HCT116 (cell line): ENCODE measurements at regions of chr6 and their contacts with region 1.

Region 1: GRCh38 chr6:131694831-131695426 is 6.3 kb downstream of the OR2A4 start:
- DNase-seq: peak; percentile 47
- ATAC-seq: peak; percentile 97
- H3K4me3 ChIP-seq: no peak overlapping the region
- H3K27ac ChIP-seq: no peak overlapping the region
- H3K4me1 ChIP-seq: no peaks in the 10 kb centered on the region
- H3K27me3 ChIP-seq: no peaks in the 10 kb centered on the region
- CTCF ChIP-seq: peak; percentile 73 to 87 (median 75); a peak in 5 of 6 replicates
- POLR2A ChIP-seq: no peak
- RAD21 ChIP-seq: peak; percentile 87

Region 2: DNA sequence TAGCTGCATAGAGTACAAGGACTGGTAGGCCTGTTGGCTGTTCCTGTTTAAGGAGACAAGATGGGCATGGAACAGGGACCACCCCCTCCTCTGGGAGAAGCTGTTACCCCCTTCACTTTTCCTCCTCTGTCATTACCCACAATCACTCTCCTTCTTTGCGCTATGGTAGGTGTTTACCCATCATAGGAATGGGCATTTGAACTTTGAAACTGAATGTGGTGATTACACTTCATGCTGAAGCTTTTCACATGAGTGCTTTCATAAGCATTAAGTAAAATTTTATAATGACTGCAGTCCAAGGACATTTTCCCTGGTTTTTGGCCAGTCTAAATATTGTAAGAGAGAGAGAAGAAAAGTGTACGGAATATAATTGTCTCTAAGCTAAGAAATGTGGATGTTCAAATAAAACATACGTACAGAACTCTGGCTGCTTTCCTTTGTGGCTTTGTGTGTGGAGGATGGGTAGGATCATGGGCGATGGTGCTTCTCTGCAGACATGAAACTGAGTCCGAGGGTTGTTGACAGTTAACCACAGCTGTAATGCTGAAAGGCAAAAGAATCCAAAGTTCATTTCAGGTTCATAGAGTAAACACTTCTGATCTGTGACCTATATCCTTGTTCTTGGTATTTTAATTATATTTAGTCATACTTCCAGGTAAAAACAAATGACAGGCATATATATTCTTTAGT is 200.0 kb after region 1 on chr6:
- CTCF ChIA-PET with region 1: no interaction called
- POLR2A ChIA-PET with region 1: no interaction called
- RAD21 ChIA-PET with region 1: no interaction called
- intact Hi-C with region 1: loop called (anchors 5 kb)
- DNase-seq: no peak
- ATAC-seq: no peak
- H3K4me3 ChIP-seq: no peak overlapping the region
- H3K27ac ChIP-seq: no peak overlapping the region
- H3K4me1 ChIP-seq: no peaks in the 10 kb centered on the region
- H3K27me3 ChIP-seq: no peaks in the 10 kb centered on the region
- CTCF ChIP-seq: no peak
- POLR2A ChIP-seq: no peak
- RAD21 ChIP-seq: no peak

Region 3: GRCh38 chr6:131909408-131910218 is 214.7 kb after region 1 on chr6:
- CTCF ChIA-PET with region 1: interaction called, 60 read pairs
- POLR2A ChIA-PET with region 1: no interaction called
- RAD21 ChIA-PET with region 1: interaction called, 9 read pairs
- intact Hi-C with region 1: loop called (anchors 1 kb)
- DNase-seq: peak; percentile 57
- ATAC-seq: peak; percentile 94
- H3K4me3 ChIP-seq: no peak overlapping the region
- H3K27ac ChIP-seq: no peak overlapping the region
- H3K4me1 ChIP-seq: no peaks in the 10 kb centered on the region
- H3K27me3 ChIP-seq: no peaks in the 10 kb centered on the region
- CTCF ChIP-seq: peak; percentile 74 to 82 (median 82)
- POLR2A ChIP-seq: no peak
- RAD21 ChIP-seq: peak; percentile 86

Region 4: DNA sequence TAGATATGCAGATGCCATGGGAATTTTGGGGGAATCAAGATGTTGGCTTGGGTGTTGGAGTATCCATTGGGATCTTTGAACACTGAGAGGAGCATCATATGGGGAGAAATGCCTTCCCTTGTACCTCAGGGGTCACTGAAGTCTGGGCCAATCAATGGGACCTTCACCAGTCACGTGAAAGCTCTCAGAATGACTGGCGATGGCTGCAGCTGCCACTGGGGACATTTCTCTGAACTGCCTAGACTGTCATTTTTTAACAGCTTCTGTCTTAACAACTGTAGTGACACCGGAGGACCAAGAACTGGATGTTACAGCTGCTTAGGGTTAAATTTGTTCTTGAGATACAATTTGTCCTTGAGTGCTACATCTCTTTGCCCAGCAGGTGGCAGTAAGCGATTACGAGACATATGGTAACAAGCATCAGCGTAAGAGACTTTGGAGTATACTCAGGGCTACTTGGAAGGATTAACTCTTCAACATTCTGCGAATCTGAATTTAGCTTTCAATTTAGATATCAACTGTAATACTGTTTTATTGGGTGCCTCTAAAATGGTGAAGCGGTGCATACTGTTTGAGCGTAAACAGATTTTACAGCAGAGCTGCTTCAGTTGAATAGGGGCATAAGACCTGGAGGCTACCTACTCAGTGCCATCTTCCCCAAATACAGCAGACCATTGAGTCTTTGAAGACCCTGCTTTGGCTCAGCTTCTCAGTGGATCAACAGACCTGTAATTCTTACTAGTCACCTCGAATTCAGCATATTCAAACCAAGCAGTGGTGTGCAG is 220.2 kb after region 1 on chr6:
- CTCF ChIA-PET with region 1: interaction called, 60 read pairs
- POLR2A ChIA-PET with region 1: no interaction called
- RAD21 ChIA-PET with region 1: interaction called, 9 read pairs
- intact Hi-C with region 1: loop called (anchors 1 kb)
- DNase-seq: peak; percentile 68
- ATAC-seq: peak; percentile 92
- H3K4me3 ChIP-seq: no peak overlapping the region
- H3K27ac ChIP-seq: no peak overlapping the region
- H3K4me1 ChIP-seq: 0 out of 4 replicates have a peak, but pooled peaks cover 0 to 7% of the 10 kb centered on the region in 2 experiments
- H3K27me3 ChIP-seq: no peaks in the 10 kb centered on the region
- CTCF ChIP-seq: peak; percentile 75 to 94 (median 87)
- POLR2A ChIP-seq: no peak
- RAD21 ChIP-seq: peak; percentile 78

Region 5: GRCh38 chr6:132218059-132218696 is 523.2 kb after region 1 on chr6:
- CTCF ChIA-PET with region 1: no interaction called
- POLR2A ChIA-PET with region 1: no interaction called
- RAD21 ChIA-PET with region 1: no interaction called
- intact Hi-C with region 1: loop called (anchors 10 kb)
- DNase-seq: peak; percentile 3
- ATAC-seq: no peak
- H3K4me3 ChIP-seq: no peak overlapping the region
- H3K27ac ChIP-seq: no peak overlapping the region
- H3K4me1 ChIP-seq: no peaks in the 10 kb centered on the region
- H3K27me3 ChIP-seq: no peaks in the 10 kb centered on the region
- CTCF ChIP-seq: peak; percentile 36 to 72 (median 47); a peak in 5 of 6 replicates
- POLR2A ChIP-seq: no peak
- RAD21 ChIP-seq: peak; percentile 65

Region 6: GRCh38 chr6:132259070-132259469 is 564.1 kb after region 1 on chr6:
- CTCF ChIA-PET with region 1: no interaction called
- POLR2A ChIA-PET with region 1: no interaction called
- RAD21 ChIA-PET with region 1: no interaction called
- intact Hi-C with region 1: loop called (anchors 10 kb)
- DNase-seq: no peak
- ATAC-seq: peak; percentile 60
- H3K4me3 ChIP-seq: no peak overlapping the region
- H3K27ac ChIP-seq: no peak overlapping the region
- H3K4me1 ChIP-seq: no peaks in the 10 kb centered on the region
- H3K27me3 ChIP-seq: no peaks in the 10 kb centered on the region
- CTCF ChIP-seq: peak in 2 of 3 experiments; percentile 42 to 54; a peak in 3 of 6 replicates
- POLR2A ChIP-seq: no peak
- RAD21 ChIP-seq: peak; percentile 55

Region 7: GRCh38 chr6:132483779-132484679 is 789.1 kb after region 1 on chr6:
- CTCF ChIA-PET with region 1: no interaction called
- POLR2A ChIA-PET with region 1: no interaction called
- RAD21 ChIA-PET with region 1: no interaction called
- intact Hi-C with region 1: loop called (anchors 10 kb)
- DNase-seq: peak; percentile 47
- ATAC-seq: peak; percentile 76
- H3K4me3 ChIP-seq: no peak overlapping the region
- H3K27ac ChIP-seq: no peak overlapping the region
- H3K4me1 ChIP-seq: no peaks in the 10 kb centered on the region
- H3K27me3 ChIP-seq: no peaks in the 10 kb centered on the region
- CTCF ChIP-seq: peak; percentile 47 to 86 (median 80)
- POLR2A ChIP-seq: no peak
- RAD21 ChIP-seq: peak; percentile 82